ENCODE measurements at regions of chr5 and their contacts with region 1.

Region 1: GRCh38 chr5:177497292-177498033 is at the start of gene PDLIM7:
- DNase-seq: peak; percentile 98
- ATAC-seq: peak; percentile 90
- total RNA-seq, gene PDLIM7: 43.1 TPM

Region 2: GRCh38 chr5:177077335-177077734 is 420.1 kb before region 1 on chr5:
- intact Hi-C with region 1: no loop called
- DNase-seq: no peak
- ATAC-seq: no peak

Region 3: GRCh38 chr5:177390363-177391300 is 106.8 kb before region 1 on chr5:
- intact Hi-C with region 1: loop called (anchors 1 kb)
- DNase-seq: peak; percentile 79
- ATAC-seq: peak; percentile 83

Region 4: GRCh38 chr5:177403792-177404640 is 93.4 kb before region 1 on chr5:
- intact Hi-C with region 1: loop called (anchors 2 kb)
- DNase-seq: peak; percentile 94
- ATAC-seq: peak; percentile 93

Region 5: GRCh38 chr5:177425801-177426565 is 71.5 kb before region 1 on chr5:
- intact Hi-C with region 1: loop called (anchors 1 kb)
- DNase-seq: peak; percentile 100
- ATAC-seq: peak; percentile 98

Region 6: GRCh38 chr5:177478711-177479646 is 18.5 kb before region 1 on chr5:
- intact Hi-C with region 1: loop called (anchors 1 kb)
- DNase-seq: peak; percentile 93
- ATAC-seq: peak; percentile 93

Measured in Right ventricle myocardium inferior (tissue), 1 donor.